ENCODE measurements at regions of chr3 and their contacts with region 1.

Region 1: GRCh38 chr3:177337541-177338331 is 140.5 kb upstream of the TBL1XR1 start:
- DNase-seq: peak; percentile 66 to 78
- ATAC-seq: peak; percentile 70 to 83 (median 72)
- H3K4me3 ChIP-seq: no peak overlapping the region
- H3K4me3 Mint-ChIP-seq: peak overlapping the region; percentile 57
- H3K27ac ChIP-seq: peak overlapping the region; percentile 37
- H3K27ac Mint-ChIP-seq: peak overlapping the region; percentile 74 to 81
- H3K4me1 ChIP-seq: peaks cover 29% of the 10 kb centered on the region
- H3K4me1 Mint-ChIP-seq: peaks cover 45 to 46% of the 10 kb centered on the region in 2 donors
- H3K27me3 ChIP-seq: no peaks in the 10 kb centered on the region
- H3K27me3 Mint-ChIP-seq: peaks cover 2 to 7% of the 10 kb centered on the region in 2 donors
- CTCF ChIP-seq: no peak

Region 2: GRCh38 chr3:177005718-177006405 is 331.9 kb before region 1 on chr3:
- intact Hi-C with region 1: no loop called
- DNase-seq: no peak
- ATAC-seq: no peak
- H3K4me3 ChIP-seq: no peak overlapping the region
- H3K4me3 Mint-ChIP-seq: no peak overlapping the region
- H3K27ac ChIP-seq: no peak overlapping the region
- H3K27ac Mint-ChIP-seq: no peak overlapping the region
- H3K4me1 ChIP-seq: no peaks in the 10 kb centered on the region
- H3K4me1 Mint-ChIP-seq: peaks cover 0 to 5% of the 10 kb centered on the region in 2 donors
- H3K27me3 ChIP-seq: no peaks in the 10 kb centered on the region
- H3K27me3 Mint-ChIP-seq: no peaks in the 10 kb centered on the region
- CTCF ChIP-seq: no peak

Region 3: DNA sequence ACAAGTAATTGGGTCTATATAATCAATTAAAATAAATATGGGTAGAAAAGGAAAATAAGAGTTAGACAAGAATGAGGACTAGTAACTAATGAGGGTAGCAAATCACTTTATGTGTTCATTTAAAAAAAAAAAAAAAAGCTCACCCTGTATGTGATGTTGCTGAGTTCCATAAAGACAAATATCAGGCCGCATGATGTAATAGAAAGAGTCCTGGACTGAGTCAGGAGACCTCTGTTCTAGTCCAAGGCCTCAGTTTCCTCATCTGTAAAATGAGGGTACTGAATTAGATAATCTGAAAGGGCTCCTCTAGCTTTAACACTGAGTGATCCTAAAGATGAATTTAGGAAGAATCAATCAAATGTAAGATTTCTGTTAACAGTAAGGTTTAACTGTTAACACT is 258.1 kb before region 1 on chr3:
- intact Hi-C with region 1: no loop called
- DNase-seq: no peak
- ATAC-seq: no peak
- H3K4me3 ChIP-seq: no peak overlapping the region
- H3K4me3 Mint-ChIP-seq: no peak overlapping the region
- H3K27ac ChIP-seq: no peak overlapping the region
- H3K27ac Mint-ChIP-seq: peak overlapping the region; percentile 29 to 53
- H3K4me1 ChIP-seq: no peaks in the 10 kb centered on the region
- H3K4me1 Mint-ChIP-seq: peaks cover 48% of the 10 kb centered on the region in 2 donors
- H3K27me3 ChIP-seq: no peaks in the 10 kb centered on the region
- H3K27me3 Mint-ChIP-seq: no peaks in the 10 kb centered on the region
- CTCF ChIP-seq: no peak

Region 4: GRCh38 chr3:177284383-177284881 is 53.3 kb before region 1 on chr3:
- intact Hi-C with region 1: loop called (anchors 5 kb)
- DNase-seq: peak in 1 of 2 donors; percentile 40
- ATAC-seq: no peak
- H3K4me3 ChIP-seq: no peak overlapping the region
- H3K4me3 Mint-ChIP-seq: no peak overlapping the region
- H3K27ac ChIP-seq: no peak overlapping the region
- H3K27ac Mint-ChIP-seq: peak overlapping the region in 1 of 2 donors; percentile 27
- H3K4me1 ChIP-seq: peaks cover 17% of the 10 kb centered on the region
- H3K4me1 Mint-ChIP-seq: peaks cover 21% of the 10 kb centered on the region in 2 donors
- H3K27me3 ChIP-seq: no peaks in the 10 kb centered on the region
- H3K27me3 Mint-ChIP-seq: no peaks in the 10 kb centered on the region
- CTCF ChIP-seq: no peak

Measured in natural killer cell (primary cell).